PC-9 (cell line): ENCODE measurements at regions of chr11 and their contacts with region 1.

Region 1: DNA sequence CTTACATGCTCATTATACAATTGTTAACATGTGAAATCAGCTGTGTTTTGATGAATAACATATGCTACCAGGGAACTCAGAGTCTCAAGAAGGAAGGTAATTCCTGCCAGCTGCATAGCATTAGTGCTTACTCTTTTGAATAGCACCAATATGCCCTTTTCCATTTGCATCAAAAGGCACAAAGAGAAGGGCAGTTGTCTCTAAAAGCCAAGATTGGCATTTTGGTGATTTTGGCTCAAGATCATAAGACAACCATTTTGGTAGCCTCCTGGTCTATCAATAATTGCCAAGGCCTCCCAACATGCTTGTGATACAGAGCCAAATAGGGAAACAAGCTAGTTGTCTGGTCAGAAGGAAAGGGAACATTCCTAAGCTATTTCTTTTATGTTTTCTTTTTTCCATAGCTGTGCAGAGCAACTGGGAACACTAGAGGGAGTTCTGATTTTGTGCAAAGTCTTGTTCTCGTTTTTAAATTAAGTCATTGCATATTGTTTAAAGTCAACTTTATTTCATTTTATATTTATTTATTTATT is 416.7 kb upstream of the CHORDC1 start:
- DNase-seq: no peak
- H3K4me3 ChIP-seq: no peak overlapping the region
- H3K27ac ChIP-seq: no peak overlapping the region
- H3K4me1 ChIP-seq: no peaks in the 10 kb centered on the region
- H3K27me3 ChIP-seq: no peaks in the 10 kb centered on the region
- CTCF ChIP-seq: peak; percentile 72

Region 2: GRCh38 chr11:91248199-91248807 is 608.8 kb after region 1 on chr11:
- CTCF ChIA-PET with region 1: no interaction called
- POLR2A ChIA-PET with region 1: no interaction called
- intact Hi-C with region 1: loop called (anchors 10 kb)
- DNase-seq: peak in 1 of 2 experiments; percentile 8
- H3K4me3 ChIP-seq: no peak overlapping the region
- H3K27ac ChIP-seq: no peak overlapping the region
- H3K4me1 ChIP-seq: no peaks in the 10 kb centered on the region; the same call in 1 of the 2 replicates
- H3K27me3 ChIP-seq: no peaks in the 10 kb centered on the region
- CTCF ChIP-seq: peak; percentile 85

Region 3: DNA sequence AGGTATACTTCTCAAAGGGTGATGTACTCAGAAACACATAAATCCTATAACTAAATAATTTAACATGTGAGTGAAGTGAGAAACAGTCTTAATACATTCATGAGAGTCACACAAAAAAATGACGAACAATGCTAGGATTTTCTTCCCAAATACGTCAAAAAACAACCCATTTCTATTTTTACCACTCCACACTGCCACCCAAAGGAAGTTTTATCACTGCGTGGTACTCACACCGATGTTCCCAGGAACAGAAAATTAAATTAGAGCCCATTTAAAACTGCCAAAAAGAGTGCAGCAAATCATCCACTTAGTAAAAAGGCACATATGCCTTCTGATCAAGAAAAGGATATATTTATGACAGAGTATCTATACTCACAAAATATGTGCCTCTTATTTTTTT is 874.2 kb after region 1 on chr11:
- CTCF ChIA-PET with region 1: no interaction called
- POLR2A ChIA-PET with region 1: no interaction called
- intact Hi-C with region 1: no loop called
- DNase-seq: no peak
- H3K4me3 ChIP-seq: no peak overlapping the region
- H3K27ac ChIP-seq: no peak overlapping the region
- H3K4me1 ChIP-seq: no peaks in the 10 kb centered on the region
- H3K27me3 ChIP-seq: no peaks in the 10 kb centered on the region
- CTCF ChIP-seq: peak; percentile 51; the same call in 1 of the 2 replicates